CD4-positive, alpha-beta T cell (primary cell): ENCODE measurements at regions of chr9 and their contacts with region 1.

Region 1: GRCh38 chr9:128249908-128250838 is 25.6 kb downstream of the GOLGA2 start:
- DNase-seq: peak; percentile 96 to 100 (median 99)
- ATAC-seq: peak; percentile 92
- H3K4me3 ChIP-seq: peak overlapping the region; percentile 56
- H3K4me3 Mint-ChIP-seq: peak overlapping the region; percentile 91
- H3K27ac ChIP-seq: peak overlapping the region; percentile 36 to 37
- H3K27ac Mint-ChIP-seq: peak overlapping the region; percentile 97
- H3K4me1 ChIP-seq: peaks cover 22% of the 10 kb centered on the region
- H3K4me1 Mint-ChIP-seq: peaks cover 22% of the 10 kb centered on the region
- H3K27me3 ChIP-seq: no peaks in the 10 kb centered on the region
- H3K27me3 Mint-ChIP-seq: peaks cover 10% of the 10 kb centered on the region
- CTCF ChIP-seq: no peak

Region 2: DNA sequence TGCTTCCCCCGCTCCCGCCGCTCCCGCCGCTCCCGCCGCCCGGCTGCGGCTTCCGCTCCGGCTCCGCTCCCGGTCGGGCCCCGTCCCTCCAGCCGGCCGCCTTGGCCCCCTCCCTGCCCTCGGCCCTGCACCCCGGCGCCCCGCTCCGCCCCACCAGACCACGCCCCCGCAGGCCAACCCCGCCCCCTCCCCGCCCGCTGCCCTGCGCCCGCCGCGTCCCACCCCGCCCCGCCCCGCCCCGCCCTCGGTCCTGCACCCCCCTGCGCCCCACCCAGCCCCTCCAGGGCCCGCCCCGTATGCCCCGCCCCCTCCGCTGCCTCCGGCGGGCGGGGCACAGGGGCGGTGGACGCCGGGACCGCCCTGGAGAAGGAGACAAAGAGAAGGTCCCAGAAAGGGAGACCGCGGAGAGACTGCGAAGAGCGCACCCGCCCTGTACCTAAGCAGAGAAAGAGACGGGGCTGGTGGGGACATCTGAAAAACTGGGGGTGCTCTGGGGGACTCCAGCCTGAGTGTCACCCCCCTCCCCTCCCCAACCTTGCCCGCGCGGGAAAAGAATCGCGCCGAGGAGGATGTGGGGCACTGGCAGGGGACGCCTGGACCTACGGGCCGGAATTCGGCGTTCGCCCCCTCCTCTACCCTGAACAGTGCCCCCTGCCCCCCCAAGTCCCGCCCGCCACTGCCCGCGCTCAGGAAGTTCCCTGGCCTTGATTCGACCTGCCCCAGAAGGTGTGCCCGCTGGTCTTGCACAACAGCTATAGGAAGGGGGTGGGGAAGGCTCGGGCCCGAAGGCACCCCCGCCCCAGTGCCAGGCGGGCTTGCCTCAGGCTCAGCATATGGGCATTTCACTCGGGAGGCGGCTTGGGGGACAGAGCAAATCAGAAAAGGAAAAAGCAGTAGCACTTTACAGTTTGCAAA is 680.9 kb before region 1 on chr9:
- CTCF ChIA-PET with region 1: no interaction called
- POLR2A ChIA-PET with region 1: no interaction called
- intact Hi-C with region 1: loop called in 1 of 2 experiments (anchors 2 kb)
- DNase-seq: peak; percentile 44 to 92 (median 74)
- ATAC-seq: peak; percentile 78
- H3K4me3 ChIP-seq: peak overlapping the region; percentile 77
- H3K4me3 Mint-ChIP-seq: peak overlapping the region; percentile 87
- H3K27ac ChIP-seq: peak overlapping the region; percentile 46 to 52
- H3K27ac Mint-ChIP-seq: peak overlapping the region; percentile 63
- H3K4me1 ChIP-seq: peaks cover 43% of the 10 kb centered on the region
- H3K4me1 Mint-ChIP-seq: peaks cover 20% of the 10 kb centered on the region
- H3K27me3 ChIP-seq: no peaks in the 10 kb centered on the region
- H3K27me3 Mint-ChIP-seq: no peaks in the 10 kb centered on the region
- CTCF ChIP-seq: no peak

Region 3: GRCh38 chr9:128142061-128142460 is 108.1 kb before region 1 on chr9:
- CTCF ChIA-PET with region 1: no interaction called
- POLR2A ChIA-PET with region 1: no interaction called
- intact Hi-C with region 1: no loop called
- DNase-seq: peak in 4 of 14 experiments; percentile 19 to 44 (median 30)
- ATAC-seq: peak; percentile 89
- H3K4me3 ChIP-seq: no peak overlapping the region
- H3K4me3 Mint-ChIP-seq: no peak overlapping the region
- H3K27ac ChIP-seq: no peak overlapping the region
- H3K27ac Mint-ChIP-seq: peak overlapping the region; percentile 26
- H3K4me1 ChIP-seq: peaks cover 15% of the 10 kb centered on the region
- H3K4me1 Mint-ChIP-seq: peaks cover 13% of the 10 kb centered on the region
- H3K27me3 ChIP-seq: no peaks in the 10 kb centered on the region
- H3K27me3 Mint-ChIP-seq: no peaks in the 10 kb centered on the region
- CTCF ChIP-seq: no peak

Region 4: GRCh38 chr9:128159784-128160602 is 90.2 kb before region 1 on chr9 and contains the start of gene BBLN:
- CTCF ChIA-PET with region 1: no interaction called
- POLR2A ChIA-PET with region 1: interaction called, 6 read pairs
- intact Hi-C with region 1: loop called in 1 of 2 experiments (anchors 2 kb)
- DNase-seq: peak; percentile 86 to 97 (median 92)
- ATAC-seq: peak; percentile 78
- H3K4me3 ChIP-seq: peak within 1 kb of the TSS; percentile 97
- H3K4me3 Mint-ChIP-seq: peak within 1 kb of the TSS; percentile 89
- H3K27ac ChIP-seq: peak within 1 kb of the TSS; percentile 77 to 86
- H3K27ac Mint-ChIP-seq: peak within 1 kb of the TSS; percentile 92
- H3K4me1 ChIP-seq: peaks cover 24% of the 10 kb centered on the region
- H3K4me1 Mint-ChIP-seq: peaks cover 20% of the 10 kb centered on the region
- H3K27me3 ChIP-seq: no peaks in the 10 kb centered on the region
- H3K27me3 Mint-ChIP-seq: no peaks in the 10 kb centered on the region
- CTCF ChIP-seq: no peak
- total RNA-seq, gene BBLN: 53.6 to 55.9 TPM

Region 5: DNA sequence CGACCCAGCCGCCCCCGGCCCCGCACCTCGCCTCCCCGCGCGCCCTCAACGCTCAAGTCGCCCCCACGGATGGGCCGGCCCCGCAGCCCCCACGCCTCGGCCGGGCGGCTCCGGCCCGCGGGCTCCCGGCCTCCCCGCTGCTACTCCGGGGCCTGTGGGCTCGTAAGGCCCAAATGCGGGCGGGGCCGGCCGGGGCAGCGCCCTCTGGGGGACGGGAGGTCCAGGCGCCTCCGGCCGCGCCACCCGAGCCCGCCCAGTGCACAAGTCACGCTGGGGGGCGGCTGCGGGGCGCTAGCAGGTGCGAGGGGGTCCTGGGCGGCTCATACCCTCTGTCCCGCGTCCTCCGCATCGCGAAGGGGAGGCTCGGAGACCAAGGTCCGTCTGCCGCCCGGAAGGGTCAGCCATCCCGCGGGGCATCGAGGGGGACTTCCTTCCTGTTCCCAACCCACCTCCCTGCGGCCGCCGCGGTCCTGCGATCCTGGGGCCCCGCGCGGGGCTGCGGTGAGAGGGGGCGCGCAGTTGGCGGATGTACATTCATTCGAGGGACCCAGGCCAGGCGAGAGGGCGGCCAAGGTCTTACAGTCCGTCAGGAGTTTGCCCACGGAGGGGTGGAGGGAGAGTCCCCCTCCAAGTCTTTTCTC is 58.6 kb before region 1 on chr9 and contains the start of gene CIZ1:
- CTCF ChIA-PET with region 1: interaction called, 3 read pairs
- POLR2A ChIA-PET with region 1: interaction called, 5 read pairs
- intact Hi-C with region 1: loop called in 1 of 2 experiments (anchors 10 kb)
- DNase-seq: peak; percentile 43 to 88 (median 70)
- ATAC-seq: peak; percentile 82
- H3K4me3 ChIP-seq: peak within 1 kb of the TSS; percentile 75
- H3K4me3 Mint-ChIP-seq: peak within 1 kb of the TSS; percentile 93
- H3K27ac ChIP-seq: no peak within 1 kb of the TSS
- H3K27ac Mint-ChIP-seq: peak within 1 kb of the TSS; percentile 89
- H3K4me1 ChIP-seq: peaks cover 24% of the 10 kb centered on the region
- H3K4me1 Mint-ChIP-seq: peaks cover 31% of the 10 kb centered on the region
- H3K27me3 ChIP-seq: peaks cover 0 to 4% of the 10 kb centered on the region in 2 experiments
- H3K27me3 Mint-ChIP-seq: no peaks in the 10 kb centered on the region
- CTCF ChIP-seq: peak; percentile 55
- total RNA-seq, gene CIZ1: 106 to 107 TPM

Region 6: DNA sequence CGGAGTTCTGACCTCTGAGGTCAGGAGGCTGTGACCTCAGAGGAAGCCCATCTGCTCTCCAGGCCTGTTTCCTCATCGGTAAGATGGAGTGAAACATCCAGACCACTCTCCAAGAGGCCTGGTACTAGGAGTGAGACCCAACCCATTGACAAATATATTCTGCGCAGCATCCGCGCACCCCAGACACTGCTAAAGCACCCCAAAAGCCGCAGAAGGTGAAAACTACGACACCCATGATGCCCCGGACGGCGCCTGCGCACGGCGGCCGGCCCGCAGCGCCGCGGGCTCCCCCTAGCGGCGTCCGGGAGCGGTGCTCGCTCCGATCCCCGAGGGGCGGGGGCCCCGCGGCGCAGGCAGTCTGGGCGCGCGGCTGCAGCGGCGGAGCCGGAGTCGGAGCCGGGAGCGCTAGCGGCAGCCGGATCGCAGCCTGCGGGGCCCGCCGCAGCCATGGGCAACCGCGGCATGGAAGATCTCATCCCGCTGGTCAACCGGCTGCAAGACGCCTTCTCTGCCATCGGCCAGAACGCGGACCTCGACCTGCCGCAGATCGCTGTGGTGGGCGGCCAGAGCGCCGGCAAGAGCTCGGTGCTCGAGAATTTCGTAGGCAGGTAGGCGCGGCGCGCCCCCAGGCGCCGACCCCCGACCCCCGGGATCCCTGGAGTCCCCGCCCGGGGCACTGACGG is 47.0 kb before region 1 on chr9 and contains the start of gene DNM1:
- CTCF ChIA-PET with region 1: no interaction called
- POLR2A ChIA-PET with region 1: interaction called, 4 read pairs
- intact Hi-C with region 1: loop called (anchors 1 to 10 kb)
- DNase-seq: peak; percentile 41 to 91 (median 65)
- ATAC-seq: peak; percentile 98
- H3K4me3 ChIP-seq: peak within 1 kb of the TSS; percentile 55
- H3K4me3 Mint-ChIP-seq: peak within 1 kb of the TSS; percentile 83
- H3K27ac ChIP-seq: no peak within 1 kb of the TSS
- H3K27ac Mint-ChIP-seq: no peak within 1 kb of the TSS
- H3K4me1 ChIP-seq: peaks cover 17% of the 10 kb centered on the region
- H3K4me1 Mint-ChIP-seq: peaks cover 5% of the 10 kb centered on the region
- H3K27me3 ChIP-seq: peaks cover 11 to 17% of the 10 kb centered on the region in 2 experiments
- H3K27me3 Mint-ChIP-seq: peaks cover 9% of the 10 kb centered on the region
- CTCF ChIP-seq: peak; percentile 72
- total RNA-seq, gene DNM1: 1.8 to 2.5 TPM

Region 7: GRCh38 chr9:128218518-128219389 is 31.4 kb before region 1 on chr9:
- CTCF ChIA-PET with region 1: interaction called, 3 read pairs
- POLR2A ChIA-PET with region 1: interaction called, 5 read pairs
- intact Hi-C with region 1: loop called in 1 of 2 experiments (anchors 2 kb)
- DNase-seq: peak; percentile 79 to 97 (median 88)
- ATAC-seq: peak; percentile 96
- H3K4me3 ChIP-seq: peak overlapping the region; percentile 60
- H3K4me3 Mint-ChIP-seq: peak overlapping the region; percentile 69
- H3K27ac ChIP-seq: no peak overlapping the region
- H3K27ac Mint-ChIP-seq: peak overlapping the region; percentile 28
- H3K4me1 ChIP-seq: peaks cover 16% of the 10 kb centered on the region
- H3K4me1 Mint-ChIP-seq: peaks cover 12% of the 10 kb centered on the region
- H3K27me3 ChIP-seq: no peaks in the 10 kb centered on the region
- H3K27me3 Mint-ChIP-seq: no peaks in the 10 kb centered on the region
- CTCF ChIP-seq: no peak

Region 8: DNA sequence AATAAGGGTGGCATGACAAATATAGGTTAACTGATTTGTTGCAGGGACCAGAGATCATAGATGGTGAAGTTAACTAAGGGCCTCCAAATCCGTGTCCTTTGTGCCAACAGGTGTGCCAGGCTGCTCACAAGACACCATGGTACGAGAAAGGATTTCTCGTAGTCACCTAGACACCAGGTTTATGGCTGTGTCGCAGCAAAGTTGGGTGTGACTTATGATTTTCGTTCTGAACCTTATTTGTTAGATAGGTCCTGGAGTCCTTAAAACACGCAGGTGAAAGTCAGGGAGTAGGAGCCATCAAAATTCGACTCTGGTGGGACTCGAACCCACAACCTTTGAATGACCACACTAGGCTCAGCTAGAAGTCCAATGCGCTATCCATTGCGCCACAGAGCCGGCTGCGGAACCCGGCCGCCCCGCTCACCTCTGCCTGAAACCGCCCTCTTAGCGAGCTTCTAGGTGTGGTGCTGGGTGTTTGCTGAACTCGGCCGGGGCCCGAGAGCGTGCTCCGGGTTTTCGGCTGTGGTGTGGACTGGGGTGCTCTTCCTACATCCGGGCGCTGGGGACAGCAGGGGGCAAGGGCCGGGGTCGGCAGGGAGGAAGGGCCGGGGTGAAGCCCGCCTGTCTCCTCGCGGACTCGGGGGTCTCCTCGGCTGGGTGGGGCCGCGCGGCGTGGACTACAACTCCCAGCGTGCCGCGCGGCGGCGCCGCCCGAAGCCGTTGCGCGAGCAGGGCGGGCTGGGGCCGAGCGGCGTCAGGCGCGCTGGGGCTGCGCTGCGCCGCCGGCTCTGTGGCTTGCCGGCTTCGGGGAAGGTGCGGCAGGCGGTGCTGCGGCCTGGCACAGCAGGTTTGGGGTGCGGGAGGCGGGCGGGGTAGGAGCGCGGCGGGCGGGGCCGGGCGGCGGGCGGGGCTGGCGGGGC is 89.9 kb after region 1 on chr9 and contains the start of gene SLC27A4:
- CTCF ChIA-PET with region 1: no interaction called
- POLR2A ChIA-PET with region 1: no interaction called
- intact Hi-C with region 1: loop called in 1 of 2 experiments (anchors 1 kb)
- DNase-seq: peak; percentile 61 to 94 (median 76)
- ATAC-seq: peak; percentile 92
- H3K4me3 ChIP-seq: peak within 1 kb of the TSS; percentile 75
- H3K4me3 Mint-ChIP-seq: peak within 1 kb of the TSS; percentile 98
- H3K27ac ChIP-seq: peak within 1 kb of the TSS; percentile 41 to 46
- H3K27ac Mint-ChIP-seq: peak within 1 kb of the TSS; percentile 81
- H3K4me1 ChIP-seq: peaks cover 21% of the 10 kb centered on the region
- H3K4me1 Mint-ChIP-seq: peaks cover 7% of the 10 kb centered on the region
- H3K27me3 ChIP-seq: no peaks in the 10 kb centered on the region
- H3K27me3 Mint-ChIP-seq: no peaks in the 10 kb centered on the region
- CTCF ChIP-seq: no peak
- total RNA-seq, gene SLC27A4: 2.2 to 3.1 TPM